ENCODE measurements at regions of chr9 and their contacts with region 1.

Region 1: DNA sequence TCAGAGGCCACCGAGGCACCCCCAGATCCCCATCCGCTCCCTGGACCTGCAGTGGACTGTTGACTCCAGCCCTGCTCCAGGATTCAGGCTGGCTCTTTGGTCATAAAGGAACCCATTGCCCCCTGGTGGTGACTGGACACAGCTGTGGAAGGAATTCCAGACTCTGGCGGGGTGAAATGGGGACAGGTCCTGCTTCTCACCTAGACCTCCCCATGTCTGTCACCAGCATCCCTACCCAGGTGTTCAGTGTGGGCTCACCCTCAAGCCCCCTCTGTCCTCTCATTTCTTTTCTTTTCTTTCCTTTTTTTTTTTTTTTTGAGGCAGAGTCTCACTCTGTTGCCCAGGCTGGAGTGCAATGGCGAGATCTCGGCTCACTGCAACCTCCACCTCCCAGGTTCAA is 25.5 kb upstream of the STXBP1 start:
- DNase-seq: peak; percentile 86 to 87
- H3K4me3 ChIP-seq: no peak overlapping the region
- H3K4me3 Mint-ChIP-seq: no peak overlapping the region
- H3K27ac Mint-ChIP-seq: no peak overlapping the region
- H3K4me1 ChIP-seq: peaks cover 5% of the 10 kb centered on the region
- H3K4me1 Mint-ChIP-seq: no peaks in the 10 kb centered on the region
- H3K27me3 ChIP-seq: no peaks in the 10 kb centered on the region; the same call in 1 of the 2 replicates
- H3K27me3 Mint-ChIP-seq: no peaks in the 10 kb centered on the region
- CTCF ChIP-seq: peak; percentile 83 to 93

Region 2: DNA sequence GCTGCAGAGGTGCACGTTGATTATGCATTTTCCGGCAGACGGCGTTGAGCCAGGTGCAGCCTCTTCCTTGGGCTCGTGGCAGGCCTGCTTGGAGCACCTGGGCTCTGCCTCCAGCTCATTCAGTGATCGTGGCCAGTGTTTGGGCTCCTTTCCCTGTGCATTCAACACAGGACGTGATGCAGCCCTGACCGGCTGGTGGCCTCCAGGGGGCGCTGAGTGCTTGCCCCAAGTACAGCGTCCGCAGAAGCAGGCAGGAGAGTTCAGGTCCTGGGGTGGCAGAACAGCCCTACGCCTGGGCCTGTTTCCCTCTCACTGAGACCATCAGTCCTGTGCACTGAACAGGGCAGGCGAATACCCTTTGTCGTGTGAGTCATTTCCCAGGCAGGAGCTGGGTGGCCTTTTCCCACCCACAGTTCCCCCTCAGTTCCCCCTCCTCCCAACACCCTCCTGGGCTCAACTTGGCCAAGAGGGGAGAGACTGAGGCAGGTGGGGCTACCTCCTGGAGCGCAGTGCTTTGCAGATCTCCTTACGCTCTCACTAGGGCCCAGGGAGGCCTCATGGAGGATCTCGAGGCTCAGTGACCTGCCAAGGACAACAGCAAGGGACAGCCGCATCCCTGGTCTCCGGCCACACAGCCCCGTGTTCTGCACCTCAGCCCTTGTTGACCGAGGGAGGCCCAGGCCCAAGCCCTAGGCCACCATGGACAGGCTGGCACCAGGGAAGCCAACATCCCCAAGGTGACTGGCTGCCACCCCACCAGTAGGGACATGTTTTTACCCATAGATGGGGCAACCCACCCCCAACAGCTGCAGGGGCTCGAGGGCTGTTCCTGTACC is 82.4 kb before region 1 on chr9:
- CTCF ChIA-PET with region 1: interaction called, 14 read pairs
- POLR2A ChIA-PET with region 1: no interaction called
- intact Hi-C with region 1: loop called (anchors 1 kb)
- DNase-seq: peak; percentile 87
- H3K4me3 ChIP-seq: no peak overlapping the region
- H3K4me3 Mint-ChIP-seq: no peak overlapping the region
- H3K27ac Mint-ChIP-seq: no peak overlapping the region
- H3K4me1 ChIP-seq: no peaks in the 10 kb centered on the region
- H3K4me1 Mint-ChIP-seq: no peaks in the 10 kb centered on the region
- H3K27me3 ChIP-seq: no peaks in the 10 kb centered on the region
- H3K27me3 Mint-ChIP-seq: no peaks in the 10 kb centered on the region
- CTCF ChIP-seq: peak; percentile 90 to 94

Region 3: DNA sequence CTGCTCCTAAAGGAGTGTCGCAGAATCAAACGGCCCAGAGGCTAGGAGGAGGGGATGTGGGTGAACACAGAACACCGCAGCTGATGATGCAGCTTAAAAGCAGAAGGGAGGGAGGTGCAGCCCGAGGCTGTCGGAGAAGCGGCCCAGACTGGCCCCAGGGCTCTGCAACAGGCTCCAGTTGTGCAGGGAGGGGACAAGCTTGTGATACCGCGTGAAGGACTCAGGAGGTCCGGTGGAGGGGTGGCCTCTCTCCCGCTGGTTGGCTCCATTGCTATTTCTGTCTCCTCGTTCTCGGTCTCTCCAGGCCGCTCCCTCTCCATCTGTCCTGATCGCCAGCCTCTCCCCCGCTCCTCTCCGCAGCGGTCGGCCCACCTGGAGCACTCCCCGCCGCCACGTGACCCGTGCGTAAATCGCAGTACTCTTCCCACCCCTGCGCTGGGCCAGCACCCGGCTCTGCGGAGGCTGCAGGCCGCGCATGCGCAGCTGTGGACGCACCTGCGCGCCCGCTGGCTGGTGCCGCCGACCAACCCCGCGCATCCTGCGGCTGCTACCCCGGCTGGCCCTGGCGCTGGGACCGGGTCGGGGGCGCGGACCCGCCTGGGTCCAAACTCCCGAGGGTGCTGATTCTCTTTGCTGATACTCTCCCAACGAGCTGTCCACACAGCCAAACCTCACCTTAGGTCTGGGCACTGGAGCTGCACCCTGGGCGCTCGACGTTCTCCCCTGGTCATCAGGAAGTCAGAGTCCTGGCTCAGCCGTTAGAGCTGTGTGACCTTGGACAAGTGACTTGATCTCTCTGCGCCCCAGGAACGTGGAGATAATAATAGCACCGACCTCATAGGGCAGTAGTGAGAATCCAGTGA is 21.8 kb after region 1 on chr9:
- CTCF ChIA-PET with region 1: no interaction called
- POLR2A ChIA-PET with region 1: no interaction called
- intact Hi-C with region 1: loop called (anchors 1 kb)
- DNase-seq: peak; percentile 89
- H3K4me3 ChIP-seq: peak overlapping the region; percentile 48
- H3K4me3 Mint-ChIP-seq: peak overlapping the region; percentile 85
- H3K27ac Mint-ChIP-seq: no peak overlapping the region
- H3K4me1 ChIP-seq: peaks cover 8% of the 10 kb centered on the region; the same call in 1 of the 2 replicates
- H3K4me1 Mint-ChIP-seq: peaks cover 11% of the 10 kb centered on the region
- H3K27me3 ChIP-seq: peaks cover 2% of the 10 kb centered on the region
- H3K27me3 Mint-ChIP-seq: peaks cover 18% of the 10 kb centered on the region
- CTCF ChIP-seq: no peak

Region 4: GRCh38 chr9:127869310-127870152 is 283.0 kb after region 1 on chr9:
- CTCF ChIA-PET with region 1: interaction called, 7 read pairs
- POLR2A ChIA-PET with region 1: no interaction called
- intact Hi-C with region 1: loop called (anchors 2 kb)
- DNase-seq: peak; percentile 88 to 93
- H3K4me3 ChIP-seq: no peak overlapping the region
- H3K4me3 Mint-ChIP-seq: no peak overlapping the region
- H3K27ac Mint-ChIP-seq: no peak overlapping the region
- H3K4me1 ChIP-seq: no peaks in the 10 kb centered on the region
- H3K4me1 Mint-ChIP-seq: peaks cover 11% of the 10 kb centered on the region
- H3K27me3 ChIP-seq: no peaks in the 10 kb centered on the region
- H3K27me3 Mint-ChIP-seq: no peaks in the 10 kb centered on the region
- CTCF ChIP-seq: peak; percentile 94 to 95

Measured in Caco-2 (cell line).